ENCODE measurements at regions of chr5 and their contacts with region 1.

Region 1: GRCh38 chr5:71601222-71602041 is 14.3 kb downstream of the MCCC2 start:
- DNase-seq: peak; percentile 98
- H3K27ac ChIP-seq: peak overlapping the region; percentile 82
- CTCF ChIP-seq: peak; percentile 76

Region 2: GRCh38 chr5:71475788-71476384 is 125.5 kb before region 1 on chr5:
- CTCF ChIA-PET with region 1: interaction called, 10 read pairs
- POLR2A ChIA-PET with region 1: no interaction called
- DNase-seq: peak; percentile 57
- H3K27ac ChIP-seq: no peak overlapping the region
- CTCF ChIP-seq: peak; percentile 73

Region 3: GRCh38 chr5:71586941-71587765 is 14.3 kb before region 1 on chr5 and contains the start of gene MCCC2:
- CTCF ChIA-PET with region 1: interaction called, 18 read pairs
- POLR2A ChIA-PET with region 1: interaction called, 9 read pairs
- DNase-seq: peak; percentile 97
- H3K27ac ChIP-seq: peak within 1 kb of the TSS; percentile 85
- CTCF ChIP-seq: no peak

Region 4: DNA sequence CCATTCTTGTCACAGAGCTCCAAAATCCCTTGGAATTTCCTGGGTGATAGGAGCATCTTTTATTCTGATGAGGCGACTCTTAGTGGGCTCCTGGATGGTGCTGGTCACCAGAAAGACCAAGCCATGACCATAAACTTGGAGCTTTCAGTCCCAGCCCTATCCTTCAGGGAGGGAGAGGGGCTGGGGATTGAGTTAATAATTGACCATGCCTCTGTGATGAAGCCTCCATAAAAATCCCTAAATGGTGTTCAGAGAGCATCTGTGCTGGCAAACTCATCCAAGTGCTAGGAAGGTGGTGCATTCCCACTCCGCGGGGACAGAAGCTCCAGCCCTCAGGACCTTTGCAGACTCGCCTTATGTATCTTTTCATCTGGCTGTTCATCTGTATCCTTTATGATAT is 14.4 kb after region 1 on chr5:
- CTCF ChIA-PET with region 1: no interaction called
- POLR2A ChIA-PET with region 1: no interaction called
- DNase-seq: no peak
- H3K27ac ChIP-seq: no peak overlapping the region
- CTCF ChIP-seq: no peak

Region 5: GRCh38 chr5:71727978-71728377 is 126.5 kb after region 1 on chr5:
- CTCF ChIA-PET with region 1: no interaction called
- POLR2A ChIA-PET with region 1: interaction called, 17 read pairs
- DNase-seq: no peak
- H3K27ac ChIP-seq: no peak overlapping the region
- CTCF ChIP-seq: no peak